CD8-positive, alpha-beta memory T cell (primary cell): ENCODE measurements at regions of chr5 and their contacts with region 1.

Region 1: DNA sequence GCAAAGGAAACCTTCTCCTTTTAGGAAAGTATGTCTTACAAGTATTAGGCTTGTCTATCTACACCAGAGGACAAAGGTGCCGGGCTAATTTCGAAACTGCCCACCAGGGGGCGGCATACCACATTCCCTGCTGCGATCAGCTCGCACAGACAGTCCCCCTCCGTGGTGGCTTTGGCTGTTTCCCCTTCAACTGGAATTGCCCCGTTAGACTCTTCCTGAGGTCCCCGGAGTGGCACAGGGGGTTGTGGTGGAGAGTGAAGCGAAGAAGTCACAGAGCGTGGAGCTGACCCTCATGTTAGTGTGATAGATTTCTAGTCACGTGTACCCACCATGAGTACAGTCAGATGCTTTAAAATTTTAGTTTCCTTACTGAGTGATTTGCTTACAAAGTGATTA is 17.5 kb downstream of the PTTG1 start:
- DNase-seq: peak; percentile 79 to 90 (median 84)
- H3K4me3 ChIP-seq: peak overlapping the region; percentile 69
- H3K4me3 Mint-ChIP-seq: peak overlapping the region; percentile 85 to 98 (median 92)
- H3K27ac ChIP-seq: peak overlapping the region; percentile 49
- H3K27ac Mint-ChIP-seq: peak overlapping the region; percentile 65 to 97 (median 86)
- H3K4me1 ChIP-seq: no peaks in the 10 kb centered on the region
- H3K4me1 Mint-ChIP-seq: peaks cover 12 to 20% (median 14%) of the 10 kb centered on the region in 3 donors
- H3K27me3 ChIP-seq: no peaks in the 10 kb centered on the region
- H3K27me3 Mint-ChIP-seq: peaks cover 2 to 13% of the 10 kb centered on the region in 2 donors

Region 2: GRCh38 chr5:160369990-160370712 is 69.1 kb before region 1 on chr5 and contains the start of gene C1QTNF2:
- CTCF ChIA-PET with region 1: no interaction called
- POLR2A ChIA-PET with region 1: no interaction called
- DNase-seq: no peak
- H3K4me3 ChIP-seq: no peak within 1 kb of the TSS
- H3K4me3 Mint-ChIP-seq: peak within 1 kb of the TSS; percentile 20 to 78 (median 57)
- H3K27ac ChIP-seq: no peak within 1 kb of the TSS
- H3K27ac Mint-ChIP-seq: peak within 1 kb of the TSS in 1 of 8 donors; percentile 60
- H3K4me1 ChIP-seq: peaks cover 4% of the 10 kb centered on the region
- H3K4me1 Mint-ChIP-seq: peaks cover 13 to 19% (median 18%) of the 10 kb centered on the region in 3 donors
- H3K27me3 ChIP-seq: peaks cover 17% of the 10 kb centered on the region
- H3K27me3 Mint-ChIP-seq: peaks cover 41 to 80% of the 10 kb centered on the region in 2 donors
- total RNA-seq, gene C1QTNF2: not detected

Region 3: DNA sequence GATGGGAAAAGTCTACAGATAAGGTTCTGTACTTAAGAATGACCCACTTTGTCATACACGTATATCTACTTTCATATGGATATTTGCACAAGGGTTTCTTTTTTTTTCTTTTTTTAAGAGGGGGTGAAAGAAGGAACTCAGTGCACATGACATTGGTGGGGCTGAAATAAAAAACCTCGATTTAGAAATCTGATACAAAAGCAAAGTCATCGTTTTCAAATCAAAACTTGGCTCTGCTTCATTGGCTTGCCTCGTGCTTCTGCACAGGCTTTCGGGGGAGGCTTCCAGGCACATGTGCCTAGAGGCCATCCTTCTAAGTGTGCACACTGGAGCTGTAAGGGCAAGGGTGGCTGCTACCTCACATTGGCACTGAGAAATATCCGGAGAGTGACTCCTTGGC is 13.6 kb after region 1 on chr5:
- CTCF ChIA-PET with region 1: interaction called, 19 read pairs
- POLR2A ChIA-PET with region 1: no interaction called
- DNase-seq: no peak
- H3K4me3 ChIP-seq: no peak overlapping the region
- H3K4me3 Mint-ChIP-seq: no peak overlapping the region
- H3K27ac ChIP-seq: no peak overlapping the region
- H3K27ac Mint-ChIP-seq: no peak overlapping the region
- H3K4me1 ChIP-seq: no peaks in the 10 kb centered on the region
- H3K4me1 Mint-ChIP-seq: peaks cover 4 to 12% (median 7%) of the 10 kb centered on the region in 3 donors
- H3K27me3 ChIP-seq: no peaks in the 10 kb centered on the region
- H3K27me3 Mint-ChIP-seq: peaks cover 3% of the 10 kb centered on the region in 2 donors

Region 4: DNA sequence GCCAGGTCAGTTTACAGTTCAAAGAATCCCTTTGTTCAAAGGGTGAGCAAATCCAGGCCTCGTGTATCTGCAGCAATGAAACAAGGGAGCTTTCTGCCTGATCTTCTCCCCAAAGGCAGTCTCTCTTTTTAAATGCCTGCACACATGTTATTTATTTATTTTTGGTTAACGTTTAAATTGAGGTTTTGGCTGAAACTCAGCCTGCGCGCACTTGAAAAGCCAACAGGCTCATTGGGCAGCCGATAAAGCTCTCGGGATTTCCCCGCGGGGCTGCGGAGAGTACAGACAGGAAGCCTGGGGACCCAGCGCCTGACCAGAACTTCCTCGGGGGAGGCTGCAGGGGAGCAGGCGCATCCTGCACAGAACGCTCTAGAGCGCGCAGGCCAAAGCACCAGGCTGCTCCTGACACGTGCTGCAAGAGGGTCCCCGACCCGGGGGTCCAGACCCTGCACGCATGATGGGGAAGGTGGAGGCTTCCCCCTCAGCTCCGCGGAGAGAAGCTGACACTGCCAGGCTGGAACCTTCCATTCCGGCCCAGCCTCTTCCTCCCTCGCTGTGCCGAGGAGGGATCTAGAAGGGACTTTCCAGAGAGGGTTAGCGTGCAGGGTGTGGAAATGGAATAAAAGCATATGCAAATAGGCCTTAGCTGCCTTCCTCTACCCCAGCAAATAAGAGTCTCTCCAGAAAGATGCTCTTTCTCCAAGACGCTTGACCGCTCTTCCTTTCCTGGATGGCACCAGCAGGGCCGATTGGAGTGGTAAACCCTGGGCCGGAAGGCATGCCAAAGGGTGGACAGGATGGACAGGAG is 28.6 kb after region 1 on chr5:
- CTCF ChIA-PET with region 1: interaction called, 75 read pairs
- POLR2A ChIA-PET with region 1: interaction called, 4 read pairs
- DNase-seq: peak; percentile 50 to 86 (median 72)
- H3K4me3 ChIP-seq: peak overlapping the region; percentile 82
- H3K4me3 Mint-ChIP-seq: peak overlapping the region; percentile 88 to 100 (median 98)
- H3K27ac ChIP-seq: peak overlapping the region; percentile 64
- H3K27ac Mint-ChIP-seq: peak overlapping the region; percentile 91 to 100 (median 98)
- H3K4me1 ChIP-seq: peaks cover 50% of the 10 kb centered on the region
- H3K4me1 Mint-ChIP-seq: peaks cover 65 to 88% (median 81%) of the 10 kb centered on the region in 3 donors
- H3K27me3 ChIP-seq: no peaks in the 10 kb centered on the region
- H3K27me3 Mint-ChIP-seq: peaks cover 0 to 4% of the 10 kb centered on the region in 2 donors

Region 5: DNA sequence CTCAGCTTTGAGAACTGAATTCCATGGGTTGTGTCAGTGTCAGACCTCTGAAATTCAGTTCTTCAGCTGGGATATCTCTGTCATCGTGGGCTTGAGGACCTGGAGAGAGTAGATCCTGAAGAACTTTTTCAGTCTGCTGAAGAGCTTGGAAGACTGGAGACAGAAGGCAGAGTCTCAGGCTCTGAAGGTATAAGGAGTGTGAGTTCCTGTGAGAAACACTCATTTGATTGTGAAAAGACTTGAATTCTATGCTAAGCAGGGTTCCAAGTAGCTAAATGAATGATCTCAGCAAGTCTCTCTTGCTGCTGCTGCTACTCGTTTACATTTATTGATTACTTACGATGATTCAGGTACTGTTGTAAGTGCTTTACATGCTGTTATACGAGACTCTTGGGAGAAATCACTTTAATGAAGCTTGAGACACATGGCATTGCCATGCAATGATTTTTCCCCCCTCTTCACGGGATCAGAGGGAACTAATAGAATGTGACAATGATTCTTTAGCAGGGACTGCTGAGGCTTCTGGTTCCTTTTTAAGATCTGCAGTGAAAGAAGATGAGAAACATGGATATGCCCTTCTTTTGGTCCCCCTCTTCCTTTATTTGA is 46.3 kb after region 1 on chr5:
- CTCF ChIA-PET with region 1: interaction called, 17 read pairs
- POLR2A ChIA-PET with region 1: no interaction called
- DNase-seq: no peak
- H3K4me3 ChIP-seq: peak overlapping the region; percentile 13
- H3K4me3 Mint-ChIP-seq: peak overlapping the region in 4 of 7 donors; percentile 8 to 71 (median 64)
- H3K27ac ChIP-seq: no peak overlapping the region
- H3K27ac Mint-ChIP-seq: peak overlapping the region; percentile 77 to 93 (median 89)
- H3K4me1 ChIP-seq: peaks cover 18% of the 10 kb centered on the region
- H3K4me1 Mint-ChIP-seq: peaks cover 39 to 72% (median 65%) of the 10 kb centered on the region in 3 donors
- H3K27me3 ChIP-seq: no peaks in the 10 kb centered on the region
- H3K27me3 Mint-ChIP-seq: no peaks in the 10 kb centered on the region

Region 6: GRCh38 chr5:160508780-160509361 is 69.7 kb after region 1 on chr5:
- CTCF ChIA-PET with region 1: interaction called, 104 read pairs
- POLR2A ChIA-PET with region 1: no interaction called
- DNase-seq: peak; percentile 30 to 77 (median 66)
- H3K4me3 ChIP-seq: no peak overlapping the region
- H3K4me3 Mint-ChIP-seq: peak overlapping the region in 1 of 7 donors; percentile 8
- H3K27ac ChIP-seq: no peak overlapping the region
- H3K27ac Mint-ChIP-seq: peak overlapping the region in 7 of 8 donors; percentile 10 to 92 (median 80)
- H3K4me1 ChIP-seq: peaks cover 24% of the 10 kb centered on the region
- H3K4me1 Mint-ChIP-seq: peaks cover 29 to 34% (median 32%) of the 10 kb centered on the region in 3 donors
- H3K27me3 ChIP-seq: no peaks in the 10 kb centered on the region
- H3K27me3 Mint-ChIP-seq: peaks cover 0 to 5% of the 10 kb centered on the region in 2 donors

Region 7: GRCh38 chr5:160657068-160657507 is 217.9 kb after region 1 on chr5:
- CTCF ChIA-PET with region 1: no interaction called
- POLR2A ChIA-PET with region 1: no interaction called
- DNase-seq: no peak
- H3K4me3 ChIP-seq: no peak overlapping the region
- H3K4me3 Mint-ChIP-seq: no peak overlapping the region
- H3K27ac ChIP-seq: no peak overlapping the region
- H3K27ac Mint-ChIP-seq: no peak overlapping the region
- H3K4me1 ChIP-seq: no peaks in the 10 kb centered on the region
- H3K4me1 Mint-ChIP-seq: no peaks in the 10 kb centered on the region
- H3K27me3 ChIP-seq: no peaks in the 10 kb centered on the region
- H3K27me3 Mint-ChIP-seq: peaks cover 6 to 34% of the 10 kb centered on the region in 2 donors